ENCODE measurements at regions of chr17 and their contacts with region 1.

Region 1: DNA sequence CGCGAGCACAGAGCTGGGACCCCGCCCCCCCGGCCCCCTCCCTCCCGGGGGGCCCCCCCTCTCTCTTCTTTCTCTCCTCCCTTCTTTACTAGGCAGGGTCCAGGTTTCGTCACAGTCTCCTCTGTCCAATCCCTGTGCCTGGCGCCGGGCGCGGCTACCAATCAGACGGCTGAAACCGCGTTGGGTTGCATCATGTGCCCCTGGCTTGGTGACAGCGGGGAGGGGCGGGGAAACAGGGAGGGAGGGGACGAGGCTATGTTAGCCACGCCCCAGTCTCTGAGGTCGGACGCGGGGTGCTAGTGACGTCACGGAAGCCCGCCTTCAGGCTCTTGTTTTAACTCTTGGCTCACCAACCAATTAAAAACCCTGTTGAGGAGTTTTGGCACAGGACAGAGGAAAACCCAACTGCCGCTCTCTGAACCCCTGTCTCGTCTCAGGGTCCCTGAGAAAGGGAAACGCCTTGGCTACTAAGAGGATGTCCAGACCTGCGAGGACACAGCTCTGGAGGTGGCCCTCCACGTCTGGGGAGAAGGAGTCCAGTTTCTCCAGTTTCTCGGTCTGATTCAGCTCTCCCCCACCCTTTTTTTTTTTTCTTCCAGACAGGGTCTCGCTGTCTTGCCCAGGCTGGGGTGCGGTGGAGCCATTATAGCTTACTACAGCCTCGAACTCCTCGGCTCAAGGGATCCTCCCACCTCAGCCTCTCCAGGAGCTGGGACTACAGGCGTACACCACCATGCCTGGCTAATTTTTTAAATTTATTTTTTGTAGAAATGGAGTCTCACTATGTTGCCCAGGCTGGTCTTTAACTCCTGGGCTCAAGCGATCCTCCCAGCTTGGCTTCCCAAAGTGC is 439 bp upstream of the PLEKHH3 start:
- DNase-seq: peak; percentile 98 to 100 (median 99)

Region 2: GRCh38 chr17:42577532-42578281 is 99.5 kb before region 1 on chr17 and contains the start of gene PSMC3IP:
- intact Hi-C with region 1: loop called (anchors 5 kb)
- DNase-seq: peak; percentile 91 to 99 (median 96)

Region 3: DNA sequence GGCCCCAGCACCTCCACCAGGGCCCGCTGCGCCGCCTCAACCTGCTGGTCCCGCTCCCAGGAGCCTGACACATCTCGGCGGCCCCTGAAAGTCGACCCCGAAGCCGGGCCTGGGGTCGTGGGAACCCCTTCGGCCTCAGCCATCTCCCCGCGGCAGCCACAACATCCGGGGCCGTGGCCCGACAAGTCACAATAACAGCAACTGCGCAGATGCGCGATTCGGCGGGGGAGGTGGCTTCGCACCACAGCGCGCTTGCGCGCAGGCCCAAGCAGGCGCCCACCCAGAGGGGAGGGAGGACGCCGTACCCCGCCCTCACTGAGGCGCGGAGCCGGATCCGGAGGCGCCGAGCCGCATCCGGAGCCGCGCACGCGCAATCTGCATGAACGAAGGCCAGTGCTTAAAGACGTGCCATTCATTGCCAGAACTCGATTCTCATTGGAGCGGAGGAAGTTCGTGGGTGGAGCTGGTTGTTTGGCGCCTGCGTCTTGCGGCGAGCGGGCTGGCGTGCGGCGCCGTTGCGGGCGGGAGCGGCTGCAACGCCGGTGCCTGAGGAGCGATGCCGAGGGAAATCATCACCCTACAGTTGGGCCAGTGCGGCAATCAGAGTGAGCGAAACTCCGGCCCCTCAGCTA is 67.9 kb before region 1 on chr17 and contains the starts of genes RETREG3 and TUBG1:
- intact Hi-C with region 1: loop called (anchors 5 kb)
- DNase-seq: peak; percentile 96 to 100 (median 99)

Region 4: DNA sequence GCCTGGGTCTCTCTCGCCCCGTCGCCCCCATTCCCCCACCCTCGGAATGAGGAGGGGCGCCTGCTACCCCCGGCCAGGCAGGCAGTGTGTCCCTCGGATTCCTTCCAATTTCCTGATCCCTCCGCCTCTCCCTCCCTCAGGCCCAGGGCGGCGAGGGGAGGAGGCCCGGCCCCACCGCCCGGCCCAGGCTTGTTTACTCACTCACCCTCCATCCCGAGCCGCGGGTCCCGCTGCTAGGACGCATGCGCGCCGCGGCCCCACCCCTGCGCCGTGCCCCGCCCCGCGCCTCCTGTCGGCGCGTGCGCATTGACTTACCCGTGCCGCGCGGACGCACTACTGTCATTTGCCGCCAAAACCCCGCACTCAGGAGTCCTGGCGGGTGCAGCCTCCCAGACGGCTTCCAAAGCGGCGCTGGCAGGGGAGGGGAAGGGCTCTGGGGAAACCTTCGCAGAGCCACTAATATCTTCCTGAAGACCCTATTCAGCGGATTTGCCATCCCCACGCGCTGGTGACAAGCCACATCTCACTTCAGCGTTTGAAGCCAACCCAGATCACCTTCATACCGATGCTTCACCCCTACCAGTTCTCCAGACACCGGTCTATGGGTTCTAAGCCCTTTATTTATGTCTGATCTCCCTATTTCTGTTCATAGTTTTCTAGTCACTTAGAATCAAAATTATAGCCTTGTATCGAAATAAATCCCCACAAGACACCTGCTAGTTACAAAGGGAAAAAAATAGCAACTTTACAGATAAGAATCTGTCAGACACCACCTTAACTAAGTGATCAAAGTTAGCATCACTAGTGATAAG is 67.8 kb after region 1 on chr17 and contains the start of gene EZH1:
- intact Hi-C with region 1: no loop called
- DNase-seq: peak; percentile 71 to 94 (median 89)

Measured in head of caudate nucleus (tissue), 42 donors.